Gastrocnemius medialis (tissue), 4 donors: ENCODE measurements at regions of chr1 and their contacts with region 1.

Region 1: GRCh38 chr1:47785561-47786271 is 211.5 kb downstream of the TRABD2B start:
- DNase-seq: peak; percentile 40 to 60
- ATAC-seq: peak; percentile 81 to 85
- H3K4me3 ChIP-seq: no peak overlapping the region
- H3K27ac ChIP-seq: peak overlapping the region in 3 of 4 donors; percentile 53 to 57 (median 57)
- H3K4me1 ChIP-seq: peaks cover 24 to 54% of the 10 kb centered on the region in 2 donors
- H3K27me3 ChIP-seq: no peaks in the 10 kb centered on the region
- CTCF ChIP-seq: peak in 4 of 5 experiments; percentile 28 to 48 (median 43)
- POLR2A ChIP-seq: no peak

Region 2: DNA sequence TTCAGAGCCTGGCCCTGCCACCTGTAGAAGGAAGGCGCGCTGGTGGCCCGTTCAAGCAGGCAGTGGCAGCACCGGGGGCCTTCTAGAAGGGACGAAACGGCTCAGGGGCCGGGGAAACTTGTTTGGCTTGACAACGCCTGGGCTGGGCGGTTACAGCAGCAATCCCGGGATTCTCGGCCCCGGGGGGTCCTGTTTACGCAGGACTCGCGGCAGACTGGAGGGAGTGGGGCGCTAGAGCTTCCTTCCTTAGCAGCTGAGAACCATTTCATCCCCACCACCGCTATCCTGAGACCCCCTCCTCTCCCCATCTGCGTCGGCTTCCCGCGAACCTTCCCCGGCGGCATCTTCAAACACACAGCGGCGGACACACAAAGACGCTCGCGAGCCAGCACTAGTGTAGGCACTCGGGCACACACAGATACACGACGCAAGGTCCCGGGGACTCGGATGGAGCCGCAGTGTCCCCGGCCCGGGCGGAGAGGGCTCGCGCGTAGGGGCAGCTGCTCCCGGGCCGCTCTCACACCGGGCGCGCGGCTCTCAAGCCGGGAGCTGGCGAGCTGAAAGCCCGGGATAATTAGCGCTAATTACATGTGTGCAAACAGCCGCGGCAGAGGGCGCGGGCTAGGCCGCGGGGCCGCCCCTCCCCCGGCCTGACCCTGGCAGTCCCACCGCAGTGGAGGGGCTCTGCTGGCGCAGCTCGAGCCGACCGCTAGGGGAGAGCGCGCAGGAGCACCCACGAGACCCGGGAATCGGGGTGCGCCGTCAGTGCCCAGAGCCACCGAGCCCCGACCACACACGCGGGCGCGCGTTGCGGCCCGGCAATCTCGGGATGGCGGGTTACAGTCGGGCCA is 76.5 kb before region 1 on chr1:
- in situ Hi-C with region 1: no loop called
- intact Hi-C with region 1: no loop called
- DNase-seq: no peak
- ATAC-seq: peak; percentile 31
- H3K4me3 ChIP-seq: peak overlapping the region; percentile 42 to 62 (median 52)
- H3K27ac ChIP-seq: no peak overlapping the region
- H3K4me1 ChIP-seq: peaks cover 9 to 16% of the 10 kb centered on the region in 2 donors
- H3K27me3 ChIP-seq: peaks cover 56 to 68% (median 62%) of the 10 kb centered on the region in 3 donors
- CTCF ChIP-seq: peak in 3 of 5 experiments; percentile 29 to 36 (median 32)
- POLR2A ChIP-seq: no peak

Region 3: GRCh38 chr1:47849005-47849521 is 63.3 kb after region 1 on chr1:
- in situ Hi-C with region 1: no loop called
- intact Hi-C with region 1: no loop called
- DNase-seq: peak in 1 of 2 donors; percentile 40
- ATAC-seq: peak; percentile 31 to 36
- H3K4me3 ChIP-seq: no peak overlapping the region
- H3K27ac ChIP-seq: no peak overlapping the region
- H3K4me1 ChIP-seq: no peaks in the 10 kb centered on the region
- H3K27me3 ChIP-seq: no peaks in the 10 kb centered on the region
- CTCF ChIP-seq: no peak
- POLR2A ChIP-seq: no peak

Region 4: GRCh38 chr1:47997289-47998200 is 211.8 kb after region 1 on chr1 and contains the start of gene TRABD2B:
- in situ Hi-C with region 1: loop called in 1 of 4 experiments (anchors 25 kb)
- intact Hi-C with region 1: no loop called
- DNase-seq: peak; percentile 51 to 65
- ATAC-seq: peak; percentile 83 to 86
- H3K4me3 ChIP-seq: peak within 1 kb of the TSS; percentile 52 to 60 (median 57)
- H3K27ac ChIP-seq: peak within 1 kb of the TSS; percentile 41 to 63 (median 53)
- H3K4me1 ChIP-seq: peaks cover 3 to 8% of the 10 kb centered on the region in 2 donors
- H3K27me3 ChIP-seq: peaks cover 12 to 22% (median 22%) of the 10 kb centered on the region in 3 donors
- CTCF ChIP-seq: peak; percentile 81 to 98 (median 92)
- POLR2A ChIP-seq: no peak
- total RNA-seq, gene TRABD2B: 0.05 to 0.15 (median 0.12) TPM